ENCODE measurements at regions of chr10 and their contacts with region 1.

Region 1: DNA sequence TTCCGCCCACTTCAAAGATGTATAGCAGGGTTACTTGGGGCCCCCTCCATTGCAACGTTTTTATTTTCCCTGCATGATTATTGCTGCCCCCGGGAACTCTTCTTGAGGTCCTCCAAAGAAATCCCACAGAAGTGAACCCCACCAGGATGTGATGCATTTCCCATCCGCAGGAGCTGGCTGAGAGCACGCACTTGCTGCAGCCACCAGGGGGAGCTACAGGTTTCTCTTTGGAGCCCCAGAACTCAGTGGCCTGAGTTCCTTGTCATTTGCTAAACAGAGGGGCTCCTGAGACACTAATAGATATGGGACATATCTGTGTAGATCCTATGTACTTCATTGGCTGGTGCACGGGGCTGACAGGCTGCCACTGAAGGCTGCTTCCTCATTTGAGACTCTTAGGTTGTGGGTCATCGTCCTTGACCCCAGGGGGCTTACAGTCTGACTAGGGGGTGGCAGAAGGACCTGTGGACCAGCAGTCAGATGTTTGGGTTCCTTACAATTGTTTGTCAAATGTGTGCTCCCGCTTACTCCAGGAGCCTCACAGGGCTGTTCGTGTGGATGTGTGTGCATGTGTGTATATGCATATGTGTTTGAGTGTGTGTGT is 52.3 kb upstream of the ENO4 start:
- DNase-seq: peak; percentile 80
- ATAC-seq: peak; percentile 89
- H3K4me3 ChIP-seq: no peak overlapping the region
- H3K27ac ChIP-seq: no peak overlapping the region
- H3K4me1 ChIP-seq: no peaks in the 10 kb centered on the region
- H3K27me3 ChIP-seq: peaks cover 17% of the 10 kb centered on the region
- CTCF ChIP-seq: peak; percentile 91

Region 2: GRCh38 chr10:116688241-116688711 is 108.7 kb before region 1 on chr10:
- intact Hi-C with region 1: loop called (anchors 10 kb)
- DNase-seq: peak; percentile 26
- ATAC-seq: no peak
- H3K4me3 ChIP-seq: no peak overlapping the region
- H3K27ac ChIP-seq: no peak overlapping the region
- H3K4me1 ChIP-seq: peaks cover 16% of the 10 kb centered on the region
- H3K27me3 ChIP-seq: no peaks in the 10 kb centered on the region
- CTCF ChIP-seq: no peak

Region 3: GRCh38 chr10:117174439-117175214 is 377.6 kb after region 1 on chr10:
- intact Hi-C with region 1: loop called (anchors 10 kb)
- DNase-seq: peak; percentile 80
- ATAC-seq: peak; percentile 95
- H3K4me3 ChIP-seq: peak overlapping the region; percentile 47
- H3K27ac ChIP-seq: no peak overlapping the region
- H3K4me1 ChIP-seq: peaks cover 12% of the 10 kb centered on the region
- H3K27me3 ChIP-seq: peaks cover 49% of the 10 kb centered on the region
- CTCF ChIP-seq: peak; percentile 89